CD8-positive, alpha-beta memory T cell (primary cell): ENCODE measurements at regions of chr6 and their contacts with region 1.

Region 1: DNA sequence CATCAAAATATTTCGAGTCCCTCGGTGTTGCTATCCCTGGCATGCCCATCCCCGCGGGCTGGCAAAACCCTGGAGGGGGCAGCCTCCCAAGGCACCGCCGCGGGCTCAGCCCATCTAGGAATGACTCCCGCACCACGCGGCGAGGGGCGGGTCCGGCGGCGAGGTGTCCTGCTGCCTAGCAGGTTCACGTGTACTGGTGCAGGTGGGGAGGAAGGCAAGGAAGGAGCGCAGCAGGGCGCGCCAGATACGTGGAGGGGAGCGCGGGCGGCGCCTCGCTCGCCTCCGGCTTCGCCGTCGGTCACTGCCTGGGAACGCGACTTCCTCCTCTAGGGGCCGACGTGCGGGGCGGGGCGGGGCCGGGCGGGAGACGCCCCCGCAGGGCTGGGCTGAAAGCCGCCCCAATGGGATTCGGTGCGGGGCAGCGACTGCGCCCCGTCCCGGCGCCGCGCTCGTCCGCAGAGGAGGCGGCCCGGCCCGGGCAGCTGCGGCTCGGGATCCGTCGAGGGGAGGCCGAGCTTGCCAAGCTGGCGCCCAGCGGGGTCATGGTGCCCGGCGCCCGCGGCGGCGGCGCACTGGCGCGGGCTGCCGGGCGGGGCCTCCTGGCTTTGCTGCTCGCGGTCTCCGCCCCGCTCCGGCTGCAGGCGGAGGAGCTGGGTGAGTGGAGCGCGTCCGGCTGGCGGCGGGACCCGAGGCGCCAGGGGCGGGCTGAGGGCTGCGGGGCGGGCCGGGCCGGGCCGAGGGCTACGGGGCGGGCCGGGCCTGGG is at the start of gene DCBLD1:
- DNase-seq: peak; percentile 36 to 61 (median 55)
- H3K4me3 ChIP-seq: peak within 1 kb of the TSS; percentile 72
- H3K4me3 Mint-ChIP-seq: peak within 1 kb of the TSS; percentile 90 to 97 (median 95)
- H3K27ac ChIP-seq: peak within 1 kb of the TSS; percentile 45
- H3K27ac Mint-ChIP-seq: peak within 1 kb of the TSS; percentile 19 to 92 (median 74)
- H3K4me1 ChIP-seq: peaks cover 17% of the 10 kb centered on the region
- H3K4me1 Mint-ChIP-seq: peaks cover 16 to 22% (median 19%) of the 10 kb centered on the region in 3 donors
- H3K27me3 ChIP-seq: no peaks in the 10 kb centered on the region
- H3K27me3 Mint-ChIP-seq: peaks cover 10 to 35% of the 10 kb centered on the region in 2 donors
- total RNA-seq, gene DCBLD1: 4.1 to 4.8 TPM

Region 2: GRCh38 chr6:117381749-117382148 is 100.7 kb before region 1 on chr6:
- CTCF ChIA-PET with region 1: no interaction called
- POLR2A ChIA-PET with region 1: no interaction called
- DNase-seq: no peak
- H3K4me3 ChIP-seq: no peak overlapping the region
- H3K4me3 Mint-ChIP-seq: no peak overlapping the region
- H3K27ac ChIP-seq: no peak overlapping the region
- H3K27ac Mint-ChIP-seq: no peak overlapping the region
- H3K4me1 ChIP-seq: no peaks in the 10 kb centered on the region
- H3K4me1 Mint-ChIP-seq: no peaks in the 10 kb centered on the region
- H3K27me3 ChIP-seq: no peaks in the 10 kb centered on the region
- H3K27me3 Mint-ChIP-seq: peaks cover 10 to 23% of the 10 kb centered on the region in 2 donors

Region 3: DNA sequence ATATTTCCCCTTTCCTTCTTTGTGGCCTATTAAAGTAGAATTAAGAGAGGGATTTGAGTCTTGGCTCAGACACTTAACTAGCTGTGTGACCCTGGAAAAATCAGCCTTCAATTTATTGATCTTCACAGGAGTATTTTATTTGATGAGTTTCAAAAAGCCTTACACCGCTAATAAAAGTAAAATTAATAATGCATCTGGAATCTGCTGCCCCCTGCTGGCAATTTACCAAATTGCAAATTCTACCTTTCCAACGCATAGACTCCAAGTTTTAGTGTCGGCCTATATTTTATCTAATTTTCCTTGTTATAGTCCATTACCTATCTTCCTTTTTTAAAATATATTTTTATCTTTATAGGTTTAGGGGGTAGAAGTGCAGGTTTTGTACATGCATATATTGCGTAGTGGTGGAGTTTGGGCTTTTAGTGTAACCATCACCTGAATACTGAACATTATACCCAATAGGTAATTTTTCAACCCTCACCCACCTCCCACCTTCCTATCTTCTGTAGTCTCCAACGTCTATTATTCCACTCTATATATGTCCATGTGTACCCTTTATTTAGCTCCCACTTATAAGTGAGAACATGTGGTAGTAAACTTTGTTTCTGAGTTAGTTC is 73.6 kb after region 1 on chr6:
- CTCF ChIA-PET with region 1: interaction called, 109 read pairs
- POLR2A ChIA-PET with region 1: interaction called, 3 read pairs
- DNase-seq: peak; percentile 44 to 62 (median 47)
- H3K4me3 ChIP-seq: no peak overlapping the region
- H3K4me3 Mint-ChIP-seq: no peak overlapping the region
- H3K27ac ChIP-seq: no peak overlapping the region
- H3K27ac Mint-ChIP-seq: no peak overlapping the region
- H3K4me1 ChIP-seq: peaks cover under 1% of the 10 kb centered on the region
- H3K4me1 Mint-ChIP-seq: peaks cover 5 to 10% (median 6%) of the 10 kb centered on the region in 3 donors
- H3K27me3 ChIP-seq: no peaks in the 10 kb centered on the region
- H3K27me3 Mint-ChIP-seq: no peaks in the 10 kb centered on the region

Region 4: GRCh38 chr6:117602151-117602898 is 119.9 kb after region 1 on chr6 and contains the start of gene GOPC:
- CTCF ChIA-PET with region 1: interaction called, 10 read pairs
- POLR2A ChIA-PET with region 1: no interaction called
- DNase-seq: peak; percentile 91 to 98 (median 96)
- H3K4me3 ChIP-seq: peak within 1 kb of the TSS; percentile 92
- H3K4me3 Mint-ChIP-seq: peak within 1 kb of the TSS; percentile 96 to 100 (median 99)
- H3K27ac ChIP-seq: peak within 1 kb of the TSS; percentile 79
- H3K27ac Mint-ChIP-seq: peak within 1 kb of the TSS; percentile 89 to 99 (median 98)
- H3K4me1 ChIP-seq: peaks cover 30% of the 10 kb centered on the region
- H3K4me1 Mint-ChIP-seq: peaks cover 45 to 54% (median 53%) of the 10 kb centered on the region in 3 donors
- H3K27me3 ChIP-seq: no peaks in the 10 kb centered on the region
- H3K27me3 Mint-ChIP-seq: peaks cover 0 to 9% of the 10 kb centered on the region in 2 donors
- total RNA-seq, gene GOPC: 21.2 to 22.0 TPM